BJ (cell line): ENCODE measurements at regions of chr1 and their contacts with region 1.

Region 1: DNA sequence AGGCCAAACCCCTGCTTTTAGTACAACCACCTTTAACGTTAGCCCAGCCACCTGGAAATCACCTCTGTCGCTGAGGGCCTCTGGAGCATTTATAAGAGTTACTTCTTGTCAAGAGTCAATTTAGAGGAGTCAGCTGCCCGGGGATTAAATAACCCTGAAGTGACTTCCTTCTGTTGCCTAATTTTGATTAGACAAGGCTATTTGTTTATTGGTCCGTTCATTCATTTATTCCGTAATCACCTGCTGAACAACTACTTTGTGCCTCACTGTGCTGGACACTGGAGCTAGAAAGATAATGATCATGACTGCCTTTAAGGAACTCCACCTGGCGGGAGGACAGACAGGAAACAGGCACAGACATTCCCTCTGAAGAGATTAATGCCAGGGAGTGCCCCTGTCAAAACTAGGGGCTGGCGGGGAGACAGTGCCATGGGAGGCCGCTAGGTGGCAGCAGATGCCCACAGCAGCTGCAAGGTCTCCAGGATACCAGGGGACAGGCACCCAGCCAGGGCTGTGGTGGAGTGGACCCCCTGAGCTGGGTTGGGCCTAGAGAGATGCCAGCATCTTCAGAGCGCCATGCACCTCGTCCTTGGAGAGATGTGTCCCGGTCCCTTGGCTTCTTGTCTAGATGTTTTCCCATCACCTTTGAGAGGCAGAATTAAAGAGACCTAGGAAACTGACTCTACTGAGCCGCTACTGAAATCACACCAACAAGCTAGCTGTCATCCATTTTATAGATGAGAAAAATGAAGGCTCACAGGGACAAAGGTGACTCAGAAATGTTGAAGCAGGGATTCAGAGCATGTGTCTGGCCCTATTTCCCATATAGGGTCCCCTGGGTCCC is 3.7 kb downstream of the REN start:
- DNase-seq: no peak
- H3K4me3 ChIP-seq: no peak overlapping the region
- H3K27me3 ChIP-seq: no peaks in the 10 kb centered on the region
- CTCF ChIP-seq: peak; percentile 99

Region 2: GRCh38 chr1:204151552-204152309 is 10.7 kb before region 1 on chr1 and contains the start of gene ETNK2:
- CTCF ChIA-PET with region 1: interaction called, 13 read pairs
- POLR2A ChIA-PET with region 1: no interaction called
- DNase-seq: no peak
- H3K4me3 ChIP-seq: peak within 1 kb of the TSS; percentile 73
- H3K27me3 ChIP-seq: no peaks in the 10 kb centered on the region; the same call in 1 of the 2 replicates
- CTCF ChIP-seq: no peak
- polyA plus RNA-seq, gene ETNK2: 27.2 and 30.7 TPM in 2 replicates

Region 3: GRCh38 chr1:204182882-204183281 is 20.4 kb after region 1 on chr1:
- CTCF ChIA-PET with region 1: interaction called, 14 read pairs
- POLR2A ChIA-PET with region 1: no interaction called
- DNase-seq: no peak
- H3K4me3 ChIP-seq: no peak overlapping the region
- H3K27me3 ChIP-seq: peaks cover 1% of the 10 kb centered on the region; the same call in 1 of the 2 replicates
- CTCF ChIP-seq: no peak

Region 4: GRCh38 chr1:204198151-204198994 is 35.9 kb after region 1 on chr1:
- CTCF ChIA-PET with region 1: interaction called, 240 read pairs
- POLR2A ChIA-PET with region 1: interaction called, 6 read pairs
- DNase-seq: peak; percentile 61
- H3K4me3 ChIP-seq: no peak overlapping the region
- H3K27me3 ChIP-seq: no peaks in the 10 kb centered on the region
- CTCF ChIP-seq: 0 out of 2 replicates have a peak, but pooled peaks have one; percentile 17

Region 5: DNA sequence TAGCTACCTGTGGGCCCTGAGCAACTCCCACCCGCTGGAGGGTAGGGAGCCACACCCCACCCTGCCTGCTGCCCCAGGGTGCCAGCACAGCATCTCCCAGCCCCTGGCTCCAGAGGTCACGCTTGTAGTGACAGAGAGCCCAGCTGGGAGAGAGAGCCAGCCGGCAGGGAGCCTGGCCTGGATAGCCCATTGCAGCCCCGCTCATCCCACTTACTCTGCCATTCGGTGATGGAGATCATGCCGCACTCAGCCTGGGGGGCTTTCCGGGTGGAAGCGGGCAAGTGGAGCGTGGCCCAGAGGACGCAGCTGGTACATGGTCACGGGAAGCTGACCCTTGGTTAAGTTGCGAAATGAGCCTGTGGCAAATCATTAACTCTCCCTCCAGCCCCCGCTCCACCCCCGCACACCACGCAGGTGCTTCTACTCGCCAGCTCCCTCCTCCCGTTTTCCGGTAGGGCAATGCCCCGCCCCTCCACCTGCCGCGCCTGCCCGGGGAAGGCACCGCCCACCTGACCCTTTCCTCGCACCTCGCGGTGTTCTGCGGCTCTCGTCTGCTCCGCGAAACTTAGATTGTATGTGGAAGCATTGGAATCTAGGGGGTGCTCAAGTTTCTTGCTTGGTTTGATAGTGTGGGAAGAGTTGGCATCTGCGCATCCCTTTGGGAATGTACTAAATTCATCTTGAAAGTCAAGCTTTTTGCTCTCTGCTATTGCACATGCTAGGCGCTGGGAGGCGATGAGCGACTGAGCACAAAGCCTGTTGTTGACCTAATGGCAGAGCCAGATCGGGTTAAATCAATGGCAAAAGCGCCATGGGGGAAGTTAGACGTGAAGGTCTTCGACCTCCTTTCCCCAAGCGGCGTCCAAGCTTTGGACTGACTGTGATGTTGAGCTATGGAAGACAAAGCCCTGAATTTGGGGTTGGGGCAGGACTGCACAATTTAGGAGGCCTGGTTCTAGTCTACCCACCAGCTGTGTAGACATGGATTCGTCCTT is 51.5 kb after region 1 on chr1 and contains the start of gene GOLT1A:
- CTCF ChIA-PET with region 1: interaction called, 41 read pairs
- POLR2A ChIA-PET with region 1: no interaction called
- DNase-seq: peak; percentile 32
- H3K4me3 ChIP-seq: no peak within 1 kb of the TSS
- H3K27me3 ChIP-seq: no peaks in the 10 kb centered on the region
- CTCF ChIP-seq: peak; percentile 87
- polyA plus RNA-seq, gene GOLT1A: 0.21 TPM in 2 replicates

Region 6: GRCh38 chr1:204363335-204364124 is 201.1 kb after region 1 on chr1:
- CTCF ChIA-PET with region 1: interaction called, 103 read pairs
- POLR2A ChIA-PET with region 1: no interaction called
- DNase-seq: no peak
- H3K4me3 ChIP-seq: peak overlapping the region; percentile 27
- H3K27me3 ChIP-seq: no peaks in the 10 kb centered on the region
- CTCF ChIP-seq: peak; percentile 89